Naive thymus-derived CD4-positive, alpha-beta T cell (primary cell): ENCODE measurements at regions of chr6 and their contacts with region 1.

Region 1: DNA sequence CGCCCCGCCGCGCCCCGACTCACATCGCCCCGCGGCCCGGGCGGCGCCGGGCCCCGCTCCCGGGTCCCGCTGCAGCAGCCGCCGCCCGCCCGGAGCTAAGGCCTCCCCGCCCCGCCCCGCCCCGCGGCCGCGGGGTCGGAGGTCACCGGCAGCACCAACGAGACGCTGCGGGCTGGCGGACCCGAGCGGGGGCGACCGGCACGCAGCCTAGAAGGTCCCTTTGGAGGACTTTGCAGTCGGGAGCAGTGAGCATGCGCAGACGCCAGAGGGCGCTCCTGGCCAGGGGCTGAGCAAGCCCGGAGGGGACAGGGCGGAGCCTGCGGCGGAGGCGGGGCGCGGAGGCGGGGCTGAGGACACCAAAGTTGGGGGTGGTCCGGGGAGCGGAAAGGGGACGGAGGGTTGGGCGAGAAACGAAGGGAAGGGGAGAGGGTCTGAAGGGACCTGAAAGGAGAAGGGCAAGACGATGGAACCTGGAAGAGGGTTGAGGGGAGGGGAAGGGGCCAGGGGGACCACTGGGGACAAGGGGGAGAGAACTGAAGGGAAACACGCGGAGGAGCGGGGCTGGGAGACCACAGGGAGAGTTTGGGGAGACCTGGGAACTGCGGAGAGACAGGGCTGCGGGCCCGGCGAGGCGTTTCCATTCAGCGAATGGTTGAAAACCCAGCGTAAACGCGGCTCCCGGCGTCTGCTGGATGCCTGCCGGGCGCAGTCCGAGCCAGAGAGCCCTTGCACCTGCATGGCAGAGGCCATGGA is at the start of gene FRS3:
- DNase-seq: peak; percentile 96 to 100 (median 97)
- ATAC-seq: peak; percentile 99
- H3K4me3 ChIP-seq: peak within 1 kb of the TSS; percentile 59
- H3K4me3 Mint-ChIP-seq: peak within 1 kb of the TSS; percentile 87 to 95 (median 90)
- H3K27ac ChIP-seq: peak within 1 kb of the TSS; percentile 65
- H3K27ac Mint-ChIP-seq: peak within 1 kb of the TSS; percentile 47 to 86 (median 72)
- H3K4me1 ChIP-seq: peaks cover 7 to 9% of the 10 kb centered on the region in 2 donors
- H3K4me1 Mint-ChIP-seq: peaks cover 10 to 26% (median 22%) of the 10 kb centered on the region in 7 donors
- H3K27me3 ChIP-seq: no peaks in the 10 kb centered on the region
- H3K27me3 Mint-ChIP-seq: peaks cover 0 to 24% (median 0%) of the 10 kb centered on the region in 5 donors
- total RNA-seq, gene FRS3: 5.1 to 10.6 (median 5.5) TPM

Region 2: GRCh38 chr6:41367700-41368099 is 412.3 kb before region 1 on chr6:
- CTCF ChIA-PET with region 1: no interaction called
- POLR2A ChIA-PET with region 1: no interaction called
- intact Hi-C with region 1: loop called in 1 of 2 experiments (anchors 1 kb)
- DNase-seq: peak in 1 of 9 donors; percentile 20
- ATAC-seq: no peak
- H3K4me3 ChIP-seq: no peak overlapping the region
- H3K4me3 Mint-ChIP-seq: no peak overlapping the region
- H3K27ac ChIP-seq: no peak overlapping the region
- H3K27ac Mint-ChIP-seq: no peak overlapping the region
- H3K4me1 ChIP-seq: peaks cover 7 to 9% of the 10 kb centered on the region in 2 donors
- H3K4me1 Mint-ChIP-seq: peaks cover 17 to 27% (median 22%) of the 10 kb centered on the region in 7 donors
- H3K27me3 ChIP-seq: peaks cover 4 to 8% of the 10 kb centered on the region in 2 donors
- H3K27me3 Mint-ChIP-seq: peaks cover 45 to 78% (median 58%) of the 10 kb centered on the region in 5 donors

Region 3: GRCh38 chr6:41545703-41546474 is 234.1 kb before region 1 on chr6 and contains the start of gene FOXP4:
- CTCF ChIA-PET with region 1: no interaction called
- POLR2A ChIA-PET with region 1: no interaction called
- intact Hi-C with region 1: no loop called
- DNase-seq: peak; percentile 45 to 83 (median 76)
- ATAC-seq: peak; percentile 95
- H3K4me3 ChIP-seq: peak within 1 kb of the TSS; percentile 64
- H3K4me3 Mint-ChIP-seq: peak within 1 kb of the TSS; percentile 91 to 96 (median 94)
- H3K27ac ChIP-seq: peak within 1 kb of the TSS; percentile 19
- H3K27ac Mint-ChIP-seq: peak within 1 kb of the TSS in 8 of 9 donors; percentile 7 to 86 (median 66)
- H3K4me1 ChIP-seq: peaks cover 20 to 27% of the 10 kb centered on the region in 2 donors
- H3K4me1 Mint-ChIP-seq: peaks cover 6 to 42% (median 25%) of the 10 kb centered on the region in 7 donors
- H3K27me3 ChIP-seq: peaks cover 2 to 9% of the 10 kb centered on the region in 2 donors
- H3K27me3 Mint-ChIP-seq: peaks cover 10 to 73% (median 16%) of the 10 kb centered on the region in 5 donors
- total RNA-seq, gene FOXP4: 3.1 to 7.6 (median 4.9) TPM

Region 4: DNA sequence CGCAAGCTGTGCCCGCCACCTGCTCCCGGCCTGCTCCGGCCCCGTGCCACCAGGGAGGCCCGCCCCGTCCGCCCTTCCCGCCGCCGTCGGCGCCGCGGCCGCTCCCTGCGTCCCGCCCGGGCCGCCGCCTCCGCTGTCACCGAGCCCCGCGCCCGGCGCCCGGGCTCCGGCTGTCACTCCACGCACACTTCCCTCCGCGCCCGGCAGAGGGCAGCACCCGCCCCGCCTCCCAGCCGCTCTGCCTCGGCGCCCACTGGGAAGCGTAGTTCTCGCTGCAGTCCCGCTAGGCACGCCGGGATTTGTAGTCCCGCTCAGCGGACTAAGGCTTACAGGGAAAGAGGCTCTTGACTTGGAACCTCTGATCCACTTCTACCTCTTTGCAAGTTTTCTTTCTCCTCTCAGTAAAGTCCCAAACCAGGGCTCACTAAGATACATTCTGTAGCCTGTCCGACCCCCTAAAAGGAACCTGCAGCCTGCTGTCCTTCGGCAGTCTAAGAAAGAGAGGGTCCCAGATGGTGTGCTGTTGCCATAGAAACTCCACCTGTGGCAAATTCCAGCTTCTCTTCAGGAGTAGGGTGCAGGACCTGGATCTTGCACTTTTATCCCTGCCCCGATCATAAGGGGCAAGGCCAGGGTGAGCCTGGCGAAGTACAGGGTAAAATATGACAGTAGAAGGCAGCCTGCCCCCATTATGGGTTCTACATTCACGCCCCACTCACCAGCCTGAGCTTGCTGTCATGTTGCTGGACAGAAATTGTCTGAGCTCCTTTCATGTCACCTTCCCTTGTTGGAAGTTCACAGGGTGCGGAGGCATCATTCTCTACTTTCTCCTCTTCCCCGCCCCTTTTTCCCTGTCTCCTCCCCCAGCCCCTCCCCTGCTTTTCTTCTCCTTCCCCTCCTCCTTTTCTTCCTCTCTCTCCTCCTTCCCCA is 44.3 kb before region 1 on chr6 and contains the start of gene TFEB:
- CTCF ChIA-PET with region 1: interaction called, 3 read pairs
- POLR2A ChIA-PET with region 1: interaction called, 6 read pairs
- intact Hi-C with region 1: loop called (anchors 1 kb)
- DNase-seq: peak; percentile 88 to 98 (median 93)
- ATAC-seq: peak; percentile 87
- H3K4me3 ChIP-seq: peak within 1 kb of the TSS; percentile 57
- H3K4me3 Mint-ChIP-seq: peak within 1 kb of the TSS; percentile 66 to 89 (median 80)
- H3K27ac ChIP-seq: peak within 1 kb of the TSS; percentile 80
- H3K27ac Mint-ChIP-seq: peak within 1 kb of the TSS in 8 of 9 donors; percentile 34 to 84 (median 62)
- H3K4me1 ChIP-seq: peaks cover 32 to 37% of the 10 kb centered on the region in 2 donors
- H3K4me1 Mint-ChIP-seq: peaks cover 13 to 32% (median 24%) of the 10 kb centered on the region in 7 donors
- H3K27me3 ChIP-seq: no peaks in the 10 kb centered on the region
- H3K27me3 Mint-ChIP-seq: no peaks in the 10 kb centered on the region
- total RNA-seq, gene TFEB: 7.4 to 39.9 (median 11.8) TPM

Region 5: GRCh38 chr6:41941280-41942066 is 161.5 kb after region 1 on chr6 and contains the start of gene CCND3:
- CTCF ChIA-PET with region 1: no interaction called
- POLR2A ChIA-PET with region 1: no interaction called
- intact Hi-C with region 1: loop called (anchors 1 to 5 kb)
- DNase-seq: peak; percentile 63 to 93 (median 76)
- ATAC-seq: peak; percentile 86
- H3K4me3 ChIP-seq: peak within 1 kb of the TSS; percentile 68
- H3K4me3 Mint-ChIP-seq: peak within 1 kb of the TSS; percentile 91 to 100 (median 93)
- H3K27ac ChIP-seq: peak within 1 kb of the TSS; percentile 76
- H3K27ac Mint-ChIP-seq: peak within 1 kb of the TSS; percentile 90 to 96 (median 94)
- H3K4me1 ChIP-seq: peaks cover 51 to 68% of the 10 kb centered on the region in 2 donors
- H3K4me1 Mint-ChIP-seq: peaks cover 40 to 83% (median 69%) of the 10 kb centered on the region in 7 donors
- H3K27me3 ChIP-seq: no peaks in the 10 kb centered on the region
- H3K27me3 Mint-ChIP-seq: no peaks in the 10 kb centered on the region
- total RNA-seq, gene CCND3: 285 to 433 (median 313) TPM

Region 6: GRCh38 chr6:42075159-42075838 is 295.3 kb after region 1 on chr6:
- CTCF ChIA-PET with region 1: no interaction called
- POLR2A ChIA-PET with region 1: no interaction called
- intact Hi-C with region 1: loop called in 1 of 2 experiments (anchors 1 kb)
- DNase-seq: peak in 8 of 9 donors; percentile 30 to 69 (median 36)
- ATAC-seq: no peak
- H3K4me3 ChIP-seq: no peak overlapping the region
- H3K4me3 Mint-ChIP-seq: no peak overlapping the region
- H3K27ac ChIP-seq: no peak overlapping the region
- H3K27ac Mint-ChIP-seq: peak overlapping the region in 6 of 9 donors; percentile 17 to 69 (median 52)
- H3K4me1 ChIP-seq: no peaks in the 10 kb centered on the region
- H3K4me1 Mint-ChIP-seq: peaks cover 0 to 12% (median 4%) of the 10 kb centered on the region in 7 donors
- H3K27me3 ChIP-seq: no peaks in the 10 kb centered on the region
- H3K27me3 Mint-ChIP-seq: no peaks in the 10 kb centered on the region

Region 7: GRCh38 chr6:42166444-42167141 is 386.6 kb after region 1 on chr6:
- CTCF ChIA-PET with region 1: interaction called, 3 read pairs
- POLR2A ChIA-PET with region 1: no interaction called
- intact Hi-C with region 1: loop called (anchors 1 kb)
- DNase-seq: peak; percentile 48 to 83 (median 71)
- ATAC-seq: peak; percentile 95
- H3K4me3 ChIP-seq: no peak overlapping the region
- H3K4me3 Mint-ChIP-seq: no peak overlapping the region
- H3K27ac ChIP-seq: no peak overlapping the region
- H3K27ac Mint-ChIP-seq: peak overlapping the region in 2 of 9 donors; percentile 10 to 51
- H3K4me1 ChIP-seq: no peaks in the 10 kb centered on the region
- H3K4me1 Mint-ChIP-seq: peaks cover 0 to 10% (median 5%) of the 10 kb centered on the region in 7 donors
- H3K27me3 ChIP-seq: no peaks in the 10 kb centered on the region
- H3K27me3 Mint-ChIP-seq: peaks cover 0 to 6% (median 3%) of the 10 kb centered on the region in 5 donors

Region 8: GRCh38 chr6:42230345-42231321 is 450.7 kb after region 1 on chr6:
- CTCF ChIA-PET with region 1: no interaction called
- POLR2A ChIA-PET with region 1: no interaction called
- intact Hi-C with region 1: loop called in 1 of 2 experiments (anchors 5 kb)
- DNase-seq: no peak
- ATAC-seq: no peak
- H3K4me3 ChIP-seq: no peak overlapping the region
- H3K4me3 Mint-ChIP-seq: no peak overlapping the region
- H3K27ac ChIP-seq: no peak overlapping the region
- H3K27ac Mint-ChIP-seq: no peak overlapping the region
- H3K4me1 ChIP-seq: no peaks in the 10 kb centered on the region
- H3K4me1 Mint-ChIP-seq: peaks cover 0 to 2% (median 0%) of the 10 kb centered on the region in 7 donors
- H3K27me3 ChIP-seq: no peaks in the 10 kb centered on the region
- H3K27me3 Mint-ChIP-seq: no peaks in the 10 kb centered on the region